ENCODE measurements at regions of chrX and their contacts with region 1.

Region 1: GRCh38 chrX:23756157-23756559 is 13.1 kb upstream of the ACOT9 start:
- DNase-seq: peak; percentile 50
- ATAC-seq: peak; percentile 93
- H3K4me3 ChIP-seq: no peak overlapping the region
- H3K27ac ChIP-seq: no peak overlapping the region
- H3K4me1 ChIP-seq: no peaks in the 10 kb centered on the region
- H3K27me3 ChIP-seq: no peaks in the 10 kb centered on the region
- CTCF ChIP-seq: peak; percentile 55 to 60 (median 59)
- EP300 ChIP-seq: peak in 1 of 2 experiments; percentile 45; a peak in 2 of 4 replicates
- POLR2A ChIP-seq: no peak
- RAD21 ChIP-seq: peak; percentile 43

Region 2: DNA sequence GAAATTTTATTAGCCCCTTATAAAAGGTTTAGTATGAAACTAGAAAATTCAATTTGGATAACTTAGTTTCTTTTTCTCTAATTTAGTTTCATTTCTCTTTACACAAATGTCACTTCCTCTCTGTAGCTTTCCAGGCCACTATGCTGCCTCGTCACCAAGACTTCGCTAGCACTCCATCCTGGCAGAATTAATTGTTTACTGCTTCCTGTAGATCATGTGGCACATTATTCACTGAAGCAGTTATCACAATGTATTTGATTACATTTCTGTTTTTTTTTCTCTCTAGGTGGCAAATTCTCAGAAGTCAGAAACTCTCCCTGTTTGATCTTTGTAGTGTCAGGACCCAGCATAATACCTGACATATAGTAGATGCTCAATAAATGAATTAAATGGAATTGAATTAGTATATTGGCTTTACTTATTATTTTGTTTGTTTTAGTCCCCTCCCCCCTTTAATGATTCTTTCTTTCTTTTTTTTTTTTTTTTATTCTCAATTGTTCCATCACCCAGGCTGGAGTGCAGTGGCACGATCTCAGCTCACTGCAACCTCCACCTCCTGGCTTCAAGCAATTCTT is 17.5 kb after region 1 on chrX:
- CTCF ChIA-PET with region 1: interaction called, 9 read pairs
- POLR2A ChIA-PET with region 1: interaction called, 3 read pairs
- RAD21 ChIA-PET with region 1: interaction called, 3 read pairs
- SMC1A ChIA-PET with region 1: no interaction called
- in situ Hi-C with region 1: no loop called
- intact Hi-C with region 1: loop called (anchors 2 kb)
- DNase-seq: peak; percentile 36
- ATAC-seq: peak; percentile 91
- H3K4me3 ChIP-seq: no peak overlapping the region
- H3K27ac ChIP-seq: peak overlapping the region; percentile 78; the same call in 1 of the 2 replicates
- H3K4me1 ChIP-seq: no peaks in the 10 kb centered on the region
- H3K27me3 ChIP-seq: no peaks in the 10 kb centered on the region
- CTCF ChIP-seq: no peak
- EP300 ChIP-seq: peak in 1 of 2 experiments; percentile 14; a peak in 1 of 4 replicates
- POLR2A ChIP-seq: no peak
- RAD21 ChIP-seq: no peak

Region 3: DNA sequence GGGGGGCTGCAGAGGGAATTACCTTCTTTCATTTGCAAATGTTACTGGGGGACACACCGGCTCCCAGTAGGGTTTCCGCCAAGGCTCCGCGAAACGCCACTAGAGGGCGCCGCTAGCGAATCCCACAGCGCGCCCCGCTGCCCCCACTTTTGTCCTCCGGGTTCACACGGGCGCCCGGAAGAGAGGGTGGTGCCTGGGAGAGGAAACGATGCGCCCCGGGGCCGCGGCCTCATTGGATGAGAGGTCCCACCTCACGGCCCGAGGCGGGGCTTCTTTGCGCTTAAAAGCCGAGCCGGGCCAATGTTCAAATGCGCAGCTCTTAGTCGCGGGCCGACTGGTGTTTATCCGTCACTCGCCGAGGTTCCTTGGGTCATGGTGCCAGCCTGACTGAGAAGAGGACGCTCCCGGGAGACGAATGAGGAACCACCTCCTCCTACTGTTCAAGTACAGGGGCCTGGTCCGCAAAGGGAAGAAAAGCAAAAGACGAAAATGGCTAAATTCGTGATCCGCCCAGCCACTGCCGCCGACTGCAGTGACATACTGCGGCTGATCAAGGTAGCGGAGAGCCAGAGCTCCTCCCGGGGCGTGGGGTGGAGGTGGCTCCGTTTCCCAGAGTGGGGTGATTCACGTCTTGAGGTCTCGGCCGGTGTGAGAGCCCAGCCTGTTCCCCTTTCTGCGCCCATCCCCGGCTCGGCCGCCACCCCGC is 26.9 kb after region 1 on chrX and contains the start of gene SAT1:
- CTCF ChIA-PET with region 1: interaction called, 5 read pairs
- POLR2A ChIA-PET with region 1: interaction called, 3 read pairs
- RAD21 ChIA-PET with region 1: no interaction called
- SMC1A ChIA-PET with region 1: interaction called, 11 read pairs
- in situ Hi-C with region 1: no loop called
- intact Hi-C with region 1: loop called (anchors 2 kb)
- DNase-seq: peak; percentile 65
- ATAC-seq: peak; percentile 88
- H3K4me3 ChIP-seq: peak within 1 kb of the TSS; percentile 75
- H3K27ac ChIP-seq: peak within 1 kb of the TSS; percentile 82
- H3K4me1 ChIP-seq: no peaks in the 10 kb centered on the region
- H3K27me3 ChIP-seq: no peaks in the 10 kb centered on the region
- CTCF ChIP-seq: peak; percentile 64 to 74 (median 65)
- EP300 ChIP-seq: no peak
- POLR2A ChIP-seq: peak; percentile 100
- RAD21 ChIP-seq: peak; percentile 65
- polyA plus RNA-seq, gene SAT1: 155 to 162 TPM

Region 4: GRCh38 chrX:23907498-23908218 is 151.5 kb after region 1 on chrX and contains the starts of genes APOO and CXorf58:
- CTCF ChIA-PET with region 1: interaction called, 12 read pairs
- POLR2A ChIA-PET with region 1: no interaction called
- RAD21 ChIA-PET with region 1: interaction called, 22 read pairs
- SMC1A ChIA-PET with region 1: interaction called, 13 read pairs
- in situ Hi-C with region 1: loop called (anchors 10 kb)
- intact Hi-C with region 1: loop called (anchors 1 kb)
- DNase-seq: peak; percentile 54
- ATAC-seq: peak; percentile 95
- H3K4me3 ChIP-seq: peak within 1 kb of the TSS; percentile 78
- H3K27ac ChIP-seq: peak within 1 kb of the TSS; percentile 73
- H3K4me1 ChIP-seq: no peaks in the 10 kb centered on the region; the same call in 1 of the 2 replicates
- H3K27me3 ChIP-seq: no peaks in the 10 kb centered on the region
- CTCF ChIP-seq: peak; percentile 73 to 83 (median 76)
- EP300 ChIP-seq: no peak; a peak in 1 of 4 replicates
- POLR2A ChIP-seq: peak; percentile 81
- RAD21 ChIP-seq: peak; percentile 51
- polyA plus RNA-seq, gene APOO: 41.8 to 42.9 TPM
- polyA plus RNA-seq, gene CXorf58: not detected

Region 5: DNA sequence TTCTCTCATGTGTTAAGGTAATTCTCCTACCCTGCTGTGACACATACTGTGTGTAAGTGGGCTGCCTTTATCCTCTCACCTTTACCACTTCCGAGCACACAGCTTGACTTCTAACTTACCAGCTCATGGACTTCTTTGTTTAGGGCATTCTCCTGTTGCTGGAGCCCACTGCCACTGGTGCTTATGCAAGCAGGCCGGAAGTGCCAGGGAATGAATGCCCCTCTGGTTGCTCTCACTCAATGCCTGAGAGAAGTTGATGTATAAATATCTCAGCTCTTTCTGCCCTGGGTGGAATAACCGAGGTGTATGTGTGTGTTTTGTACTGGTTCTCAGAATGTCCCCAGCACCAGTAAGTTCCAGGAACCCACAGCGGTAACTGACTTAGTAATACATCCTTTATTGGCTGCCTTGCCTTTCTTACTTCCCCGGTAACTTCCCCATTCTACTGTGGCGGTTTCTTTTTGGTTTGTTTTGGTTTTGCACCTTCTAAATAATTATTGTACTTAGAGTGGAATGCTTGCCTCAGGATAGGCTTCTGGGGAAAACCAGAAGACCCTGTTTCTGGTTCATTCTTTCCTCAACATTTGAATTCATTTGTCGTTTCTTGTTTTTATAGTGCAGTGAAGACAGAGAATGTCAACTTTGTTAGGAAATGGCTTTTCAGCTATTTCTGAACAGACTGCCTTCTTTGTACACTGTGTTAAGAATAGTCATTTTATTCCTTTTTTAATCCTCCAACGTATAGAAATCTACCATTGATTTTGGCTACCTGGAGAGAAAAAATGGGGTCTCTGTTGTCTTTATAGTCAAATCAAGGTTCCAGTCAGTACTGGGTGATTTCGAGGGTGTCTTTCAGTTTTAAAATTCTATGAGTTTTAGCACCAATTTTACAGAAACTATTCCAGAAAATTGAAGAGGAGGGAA is 197.1 kb after region 1 on chrX:
- CTCF ChIA-PET with region 1: no interaction called
- POLR2A ChIA-PET with region 1: no interaction called
- RAD21 ChIA-PET with region 1: no interaction called
- SMC1A ChIA-PET with region 1: no interaction called
- in situ Hi-C with region 1: no loop called
- intact Hi-C with region 1: no loop called
- DNase-seq: peak; percentile 21
- ATAC-seq: peak; percentile 96
- H3K4me3 ChIP-seq: peak overlapping the region; percentile 13; the same call in 1 of the 2 replicates
- H3K27ac ChIP-seq: peak overlapping the region; percentile 59
- H3K4me1 ChIP-seq: no peaks in the 10 kb centered on the region
- H3K27me3 ChIP-seq: no peaks in the 10 kb centered on the region
- CTCF ChIP-seq: no peak
- EP300 ChIP-seq: no peak
- POLR2A ChIP-seq: no peak
- RAD21 ChIP-seq: no peak